ENCODE measurements at regions of chrX and their contacts with region 1.

Region 1: GRCh38 chrX:9102956-9103355 is 69.0 kb upstream of the FAM9B start:
- DNase-seq: no peak
- ATAC-seq: no peak

Region 2: GRCh38 chrX:8981723-8982122 is 121.2 kb before region 1 on chrX:
- intact Hi-C with region 1: no loop called
- DNase-seq: no peak
- ATAC-seq: no peak

Region 3: GRCh38 chrX:9935436-9935835 is 832.5 kb after region 1 on chrX:
- intact Hi-C with region 1: loop called (anchors 10 kb)
- DNase-seq: no peak
- ATAC-seq: no peak

Measured in sciatic nerve (tissue), 2 donors.